Heart left ventricle (tissue), 16 donors: ENCODE measurements at regions of chr11 and their contacts with region 1.

Region 1: GRCh38 chr11:19071255-19071654 is 10.7 kb upstream of the MRGPRX2 start:
- DNase-seq: peak; percentile 43 to 73 (median 61)
- ATAC-seq: peak; percentile 85 to 96 (median 92)
- H3K4me3 ChIP-seq: peak overlapping the region in 4 of 12 donors; percentile 11 to 25 (median 16)
- H3K27ac ChIP-seq: no peak overlapping the region
- H3K4me1 ChIP-seq: peaks cover 0 to 4% (median 0%) of the 10 kb centered on the region in 12 donors
- H3K27me3 ChIP-seq: peaks cover 0 to 23% (median 0%) of the 10 kb centered on the region in 9 donors
- CTCF ChIP-seq: peak; percentile 81 to 96 (median 90)
- POLR2A ChIP-seq: no peak

Region 2: GRCh38 chr11:19105011-19105410 is 33.8 kb after region 1 on chr11:
- intact Hi-C with region 1: loop called in 8 of 10 experiments (anchors 2 to 5 kb)
- DNase-seq: no peak
- ATAC-seq: no peak
- H3K4me3 ChIP-seq: no peak overlapping the region
- H3K27ac ChIP-seq: no peak overlapping the region
- H3K4me1 ChIP-seq: peaks cover 0 to 3% (median 0%) of the 10 kb centered on the region in 12 donors
- H3K27me3 ChIP-seq: peaks cover 0 to 4% (median 0%) of the 10 kb centered on the region in 9 donors
- CTCF ChIP-seq: no peak
- POLR2A ChIP-seq: no peak

Region 3: DNA sequence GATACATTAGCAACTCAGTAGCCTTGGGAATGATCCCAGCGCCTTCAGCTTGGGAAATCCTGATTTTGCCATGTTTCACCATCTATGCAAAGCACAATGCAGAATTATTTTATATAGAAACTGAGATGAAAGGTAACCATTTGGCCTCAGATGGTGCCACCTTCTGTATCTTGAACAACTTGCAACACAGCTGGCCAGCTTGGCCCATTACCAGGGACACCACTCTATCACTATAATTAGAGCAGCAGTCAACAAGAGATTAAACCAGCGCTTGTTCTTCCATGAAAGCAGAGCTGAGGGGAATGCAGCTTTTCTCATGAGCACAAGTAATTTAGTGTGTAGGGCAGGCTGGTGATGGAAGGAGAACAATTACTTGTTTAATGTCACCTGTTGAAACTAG is 39.0 kb after region 1 on chr11:
- intact Hi-C with region 1: loop called in 8 of 10 experiments (anchors 2 to 5 kb)
- DNase-seq: peak in 4 of 5 donors; percentile 53 to 76 (median 68)
- ATAC-seq: peak; percentile 83 to 96 (median 90)
- H3K4me3 ChIP-seq: no peak overlapping the region
- H3K27ac ChIP-seq: peak overlapping the region in 5 of 12 donors; percentile 10 to 64 (median 37)
- H3K4me1 ChIP-seq: peaks cover 0 to 13% (median 0%) of the 10 kb centered on the region in 12 donors
- H3K27me3 ChIP-seq: no peaks in the 10 kb centered on the region
- CTCF ChIP-seq: peak in 4 of 12 donors; percentile 8 to 42 (median 30)
- POLR2A ChIP-seq: no peak

Region 4: GRCh38 chr11:19160847-19161246 is 89.6 kb after region 1 on chr11:
- intact Hi-C with region 1: loop called in 6 of 10 experiments (anchors 10 kb)
- DNase-seq: no peak
- ATAC-seq: peak in 1 of 4 donors; percentile 41
- H3K4me3 ChIP-seq: no peak overlapping the region
- H3K27ac ChIP-seq: no peak overlapping the region
- H3K4me1 ChIP-seq: no peaks in the 10 kb centered on the region
- H3K27me3 ChIP-seq: no peaks in the 10 kb centered on the region
- CTCF ChIP-seq: peak in 6 of 12 donors; percentile 19 to 42 (median 24)
- POLR2A ChIP-seq: no peak

Region 5: GRCh38 chr11:19259487-19260345 is 188.5 kb after region 1 on chr11:
- intact Hi-C with region 1: loop called in 3 of 10 experiments (anchors 5 to 10 kb)
- DNase-seq: peak; percentile 27 to 76 (median 57)
- ATAC-seq: peak in 3 of 4 donors; percentile 54 to 72 (median 71)
- H3K4me3 ChIP-seq: peak overlapping the region in 5 of 12 donors; percentile 18 to 49 (median 31)
- H3K27ac ChIP-seq: no peak overlapping the region
- H3K4me1 ChIP-seq: peaks cover 0 to 4% (median 0%) of the 10 kb centered on the region in 12 donors
- H3K27me3 ChIP-seq: no peaks in the 10 kb centered on the region
- CTCF ChIP-seq: peak; percentile 86 to 98 (median 94)
- POLR2A ChIP-seq: no peak

Region 6: DNA sequence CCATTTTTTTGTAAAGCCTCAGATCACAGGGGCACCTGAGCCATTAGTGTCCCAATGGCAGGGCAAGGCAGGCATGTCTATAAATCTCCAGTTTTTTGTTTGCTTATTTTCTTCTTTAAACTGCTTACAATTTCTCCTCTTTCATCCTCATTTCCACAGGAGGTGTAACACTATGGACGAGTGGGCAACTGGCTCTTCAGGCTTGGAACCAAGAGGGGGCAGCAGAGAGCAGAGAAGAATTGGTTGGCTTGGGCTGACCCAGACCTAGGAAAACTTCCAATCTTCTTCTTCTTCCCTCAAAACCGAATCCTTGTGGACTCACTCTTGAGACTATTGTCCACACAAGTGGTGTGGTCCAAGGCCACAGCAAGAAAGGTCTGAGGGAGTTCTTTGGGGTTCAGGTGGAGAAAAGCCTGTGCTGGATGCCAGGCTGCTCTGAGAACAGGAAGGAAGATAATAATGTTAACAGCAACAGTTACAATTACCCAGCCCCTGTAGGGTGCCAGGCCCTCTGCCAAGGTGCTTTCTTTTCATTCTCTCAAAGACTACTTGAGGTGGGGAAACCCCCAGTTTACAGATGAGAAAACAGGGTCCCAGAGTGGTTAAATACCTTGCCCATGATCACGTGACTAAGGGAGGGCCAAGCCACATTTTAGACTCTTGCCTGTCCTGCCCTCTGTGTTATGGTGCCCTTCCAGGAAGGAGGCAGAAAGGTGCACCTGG is 240.2 kb after region 1 on chr11:
- intact Hi-C with region 1: loop called in 1 of 10 experiments (anchors 10 kb)
- DNase-seq: peak; percentile 47 to 66 (median 60)
- ATAC-seq: peak; percentile 56 to 88 (median 80)
- H3K4me3 ChIP-seq: no peak overlapping the region
- H3K27ac ChIP-seq: no peak overlapping the region
- H3K4me1 ChIP-seq: peaks cover 0 to 10% (median 0%) of the 10 kb centered on the region in 12 donors
- H3K27me3 ChIP-seq: no peaks in the 10 kb centered on the region
- CTCF ChIP-seq: peak; percentile 70 to 86 (median 81)
- POLR2A ChIP-seq: no peak

Region 7: GRCh38 chr11:19872512-19873145 is 801.4 kb after region 1 on chr11:
- intact Hi-C with region 1: no loop called
- DNase-seq: no peak
- ATAC-seq: no peak
- H3K4me3 ChIP-seq: no peak overlapping the region
- H3K27ac ChIP-seq: no peak overlapping the region
- H3K4me1 ChIP-seq: peaks cover 0 to 47% (median 15%) of the 10 kb centered on the region in 12 donors
- H3K27me3 ChIP-seq: no peaks in the 10 kb centered on the region
- CTCF ChIP-seq: no peak
- POLR2A ChIP-seq: no peak